H1 (cell line): ENCODE measurements at regions of chr12 and their contacts with region 1.

Region 1: GRCh38 chr12:80598004-80598606 is 109.3 kb upstream of the MYF6 start:
- DNase-seq: no peak
- H3K4me3 ChIP-seq: no peak overlapping the region
- H3K27ac ChIP-seq: no peak overlapping the region
- H3K4me1 ChIP-seq: no peaks in the 10 kb centered on the region
- H3K27me3 ChIP-seq: no peaks in the 10 kb centered on the region
- CTCF ChIP-seq: peak in 2 of 3 experiments; percentile 27 to 53; a peak in 2 of 4 replicates
- EP300 ChIP-seq: no peak
- POLR2A ChIP-seq: no peak
- RAD21 ChIP-seq: peak; percentile 36 to 39; a peak in 3 of 4 replicates

Region 2: DNA sequence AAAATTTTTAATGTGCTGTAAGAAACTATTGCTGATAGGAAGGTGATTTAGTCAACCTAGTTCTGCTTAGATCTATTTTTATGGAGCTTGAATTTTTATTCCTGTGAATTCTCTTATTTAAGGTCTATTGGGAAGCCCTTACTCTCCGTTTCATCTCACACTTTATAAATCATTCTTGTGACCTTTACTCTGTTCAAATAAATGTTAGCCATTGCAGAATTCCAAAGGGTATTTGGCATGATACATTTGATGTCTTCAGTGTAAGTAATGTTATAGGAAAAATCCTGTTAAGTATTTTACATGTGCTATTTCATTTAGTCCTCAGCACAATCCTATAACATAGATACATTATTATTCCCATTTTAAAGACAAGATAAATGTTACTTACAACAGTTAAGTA is 141.6 kb before region 1 on chr12:
- CTCF ChIA-PET with region 1: no interaction called
- POLR2A ChIA-PET with region 1: no interaction called
- DNase-seq: no peak
- H3K4me3 ChIP-seq: no peak overlapping the region
- H3K27ac ChIP-seq: no peak overlapping the region
- H3K4me1 ChIP-seq: no peaks in the 10 kb centered on the region
- H3K27me3 ChIP-seq: no peaks in the 10 kb centered on the region
- CTCF ChIP-seq: no peak
- EP300 ChIP-seq: no peak
- POLR2A ChIP-seq: no peak
- RAD21 ChIP-seq: no peak

Region 3: DNA sequence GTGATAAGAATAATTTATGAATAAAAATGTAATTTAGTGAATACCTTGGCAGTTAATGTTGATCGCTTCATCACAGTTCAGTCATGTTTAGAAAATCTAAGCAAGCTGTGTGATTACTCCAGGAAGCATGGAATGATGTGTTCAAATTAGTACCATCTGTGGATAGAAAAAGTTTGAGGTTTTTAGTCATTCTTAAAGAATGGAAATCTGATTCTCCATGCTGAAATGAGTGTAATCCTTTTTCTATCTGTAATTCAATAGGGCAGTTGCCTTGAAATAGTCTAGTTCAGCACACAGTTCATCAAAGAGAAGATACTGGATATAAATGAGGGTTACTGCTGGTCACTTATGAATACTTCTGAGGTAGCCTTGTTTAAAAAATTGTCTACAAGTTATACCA is 17.9 kb before region 1 on chr12:
- CTCF ChIA-PET with region 1: interaction called, 30 read pairs
- POLR2A ChIA-PET with region 1: no interaction called
- DNase-seq: no peak
- H3K4me3 ChIP-seq: no peak overlapping the region
- H3K27ac ChIP-seq: no peak overlapping the region
- H3K4me1 ChIP-seq: no peaks in the 10 kb centered on the region
- H3K27me3 ChIP-seq: peaks cover 0 to 1% (median 0%) of the 10 kb centered on the region in 4 experiments; a peak in 1 of 7 replicates
- CTCF ChIP-seq: no peak
- EP300 ChIP-seq: no peak
- POLR2A ChIP-seq: no peak
- RAD21 ChIP-seq: no peak